CD4-positive, alpha-beta T cell (primary cell): ENCODE measurements at regions of chr11 and their contacts with region 1.

Region 1: GRCh38 chr11:13772223-13773046 is 104.0 kb downstream of the FAR1 start:
- DNase-seq: peak in 6 of 14 experiments; percentile 4 to 86 (median 66)
- ATAC-seq: peak; percentile 70
- H3K4me3 ChIP-seq: no peak overlapping the region
- H3K4me3 Mint-ChIP-seq: no peak overlapping the region
- H3K27ac ChIP-seq: no peak overlapping the region
- H3K27ac Mint-ChIP-seq: no peak overlapping the region
- H3K4me1 ChIP-seq: no peaks in the 10 kb centered on the region
- H3K4me1 Mint-ChIP-seq: no peaks in the 10 kb centered on the region
- H3K27me3 ChIP-seq: no peaks in the 10 kb centered on the region
- H3K27me3 Mint-ChIP-seq: no peaks in the 10 kb centered on the region
- CTCF ChIP-seq: peak; percentile 77

Region 2: GRCh38 chr11:13837286-13837685 is 64.9 kb after region 1 on chr11:
- CTCF ChIA-PET with region 1: no interaction called
- POLR2A ChIA-PET with region 1: no interaction called
- intact Hi-C with region 1: loop called in 1 of 2 experiments (anchors 5 kb)
- DNase-seq: no peak
- ATAC-seq: no peak
- H3K4me3 ChIP-seq: no peak overlapping the region
- H3K4me3 Mint-ChIP-seq: no peak overlapping the region
- H3K27ac ChIP-seq: no peak overlapping the region
- H3K27ac Mint-ChIP-seq: no peak overlapping the region
- H3K4me1 ChIP-seq: no peaks in the 10 kb centered on the region
- H3K4me1 Mint-ChIP-seq: no peaks in the 10 kb centered on the region
- H3K27me3 ChIP-seq: no peaks in the 10 kb centered on the region
- H3K27me3 Mint-ChIP-seq: no peaks in the 10 kb centered on the region
- CTCF ChIP-seq: no peak

Region 3: GRCh38 chr11:13955971-13956421 is 183.6 kb after region 1 on chr11:
- CTCF ChIA-PET with region 1: interaction called, 5 read pairs
- POLR2A ChIA-PET with region 1: no interaction called
- intact Hi-C with region 1: loop called (anchors 1 kb)
- DNase-seq: peak; percentile 32 to 89 (median 52)
- ATAC-seq: peak; percentile 77
- H3K4me3 ChIP-seq: no peak overlapping the region
- H3K4me3 Mint-ChIP-seq: no peak overlapping the region
- H3K27ac ChIP-seq: no peak overlapping the region
- H3K27ac Mint-ChIP-seq: no peak overlapping the region
- H3K4me1 ChIP-seq: peaks cover 10% of the 10 kb centered on the region
- H3K4me1 Mint-ChIP-seq: no peaks in the 10 kb centered on the region
- H3K27me3 ChIP-seq: peaks cover 3 to 4% of the 10 kb centered on the region in 2 experiments
- H3K27me3 Mint-ChIP-seq: peaks cover 26% of the 10 kb centered on the region
- CTCF ChIP-seq: peak; percentile 86

Region 4: DNA sequence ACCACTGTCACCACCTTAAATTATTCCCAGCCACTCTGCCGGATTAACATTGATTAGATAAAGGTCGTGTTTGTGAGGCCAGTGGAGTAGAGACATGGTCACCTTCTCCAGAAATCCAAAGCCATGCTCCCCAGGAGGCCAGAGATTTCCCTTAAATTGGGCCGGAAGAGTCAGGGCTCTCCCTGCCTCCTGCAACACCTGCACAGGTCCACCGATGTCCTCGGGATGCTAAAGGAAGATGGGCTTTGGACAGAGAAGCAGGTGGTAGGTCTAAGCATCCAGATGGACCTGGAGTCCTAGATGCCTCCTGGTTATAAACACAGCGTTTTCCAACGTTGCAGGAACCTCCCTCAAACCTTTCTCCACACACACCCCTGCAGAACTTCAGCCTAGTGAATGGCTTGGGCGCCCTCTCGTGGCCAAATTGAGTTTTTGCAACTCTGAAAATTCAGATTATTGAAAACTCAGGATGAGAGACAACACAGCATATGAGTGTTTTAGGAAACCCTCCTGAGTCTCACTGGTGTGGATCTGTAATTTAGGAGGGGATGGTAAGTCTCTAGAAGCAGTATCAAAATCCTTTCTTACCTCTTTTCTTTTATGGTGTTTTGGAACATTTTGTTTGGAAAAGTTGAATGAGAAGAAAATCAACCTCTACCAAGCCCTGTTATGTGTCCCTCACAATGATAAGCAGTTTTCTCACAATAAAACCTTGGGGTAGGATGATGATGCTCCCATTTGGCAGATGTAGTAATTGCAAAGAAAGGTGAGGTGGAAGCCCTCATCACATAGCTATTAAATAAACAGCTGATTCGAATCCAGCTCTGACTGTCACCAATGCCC is 476.9 kb after region 1 on chr11:
- CTCF ChIA-PET with region 1: interaction called, 27 read pairs
- POLR2A ChIA-PET with region 1: interaction called, 5 read pairs
- intact Hi-C with region 1: loop called (anchors 1 kb)
- DNase-seq: peak; percentile 53 to 83 (median 68)
- ATAC-seq: peak; percentile 68
- H3K4me3 ChIP-seq: peak overlapping the region; percentile 36
- H3K4me3 Mint-ChIP-seq: peak overlapping the region; percentile 62
- H3K27ac ChIP-seq: no peak overlapping the region
- H3K27ac Mint-ChIP-seq: no peak overlapping the region
- H3K4me1 ChIP-seq: peaks cover 12% of the 10 kb centered on the region
- H3K4me1 Mint-ChIP-seq: peaks cover 28% of the 10 kb centered on the region
- H3K27me3 ChIP-seq: no peaks in the 10 kb centered on the region
- H3K27me3 Mint-ChIP-seq: no peaks in the 10 kb centered on the region
- CTCF ChIP-seq: peak; percentile 98

Region 5: DNA sequence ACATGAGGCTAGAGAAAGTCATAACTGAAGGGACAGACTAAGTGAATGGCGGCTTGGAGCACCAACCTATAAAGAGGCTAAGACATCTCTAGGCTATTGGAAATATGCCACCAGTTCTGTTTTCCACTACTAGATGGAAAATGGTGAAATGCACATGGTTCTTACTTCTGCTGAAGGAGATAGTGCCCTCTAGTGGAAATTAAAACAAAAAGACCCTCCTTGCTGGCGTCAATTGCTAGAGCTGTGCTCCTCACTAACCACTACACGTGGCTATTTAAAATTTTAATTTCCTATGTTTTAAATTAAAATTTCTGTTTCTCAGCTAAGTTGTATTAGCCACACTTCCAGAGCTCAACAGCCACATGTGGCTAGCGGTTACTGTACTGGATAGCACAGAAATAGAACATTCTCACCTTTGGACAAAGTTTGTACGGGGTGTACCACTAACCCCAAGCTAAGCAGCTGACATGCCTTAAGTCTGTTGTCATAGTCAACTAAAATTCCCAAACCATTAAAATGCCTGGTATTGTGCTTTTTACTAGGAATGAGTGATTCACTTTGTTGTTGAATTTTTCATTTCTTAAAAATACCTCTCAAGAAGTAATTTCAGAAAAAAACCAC is 1233.8 kb after region 1 on chr11:
- CTCF ChIA-PET with region 1: no interaction called
- POLR2A ChIA-PET with region 1: no interaction called
- intact Hi-C with region 1: loop called in 1 of 2 experiments (anchors 10 kb)
- DNase-seq: peak in 3 of 14 experiments; percentile 55 to 57 (median 57)
- ATAC-seq: peak; percentile 54
- H3K4me3 ChIP-seq: no peak overlapping the region
- H3K4me3 Mint-ChIP-seq: no peak overlapping the region
- H3K27ac ChIP-seq: no peak overlapping the region
- H3K27ac Mint-ChIP-seq: no peak overlapping the region
- H3K4me1 ChIP-seq: no peaks in the 10 kb centered on the region
- H3K4me1 Mint-ChIP-seq: no peaks in the 10 kb centered on the region
- H3K27me3 ChIP-seq: peaks cover 0 to 19% of the 10 kb centered on the region in 2 experiments
- H3K27me3 Mint-ChIP-seq: peaks cover 64% of the 10 kb centered on the region
- CTCF ChIP-seq: peak; percentile 63

Region 6: GRCh38 chr11:15208378-15209222 is 1436.2 kb after region 1 on chr11:
- CTCF ChIA-PET with region 1: no interaction called
- POLR2A ChIA-PET with region 1: no interaction called
- intact Hi-C with region 1: loop called in 1 of 2 experiments (anchors 10 kb)
- DNase-seq: peak; percentile 52 to 79 (median 66)
- ATAC-seq: peak; percentile 81
- H3K4me3 ChIP-seq: no peak overlapping the region
- H3K4me3 Mint-ChIP-seq: no peak overlapping the region
- H3K27ac ChIP-seq: no peak overlapping the region
- H3K27ac Mint-ChIP-seq: no peak overlapping the region
- H3K4me1 ChIP-seq: peaks cover 3% of the 10 kb centered on the region
- H3K4me1 Mint-ChIP-seq: no peaks in the 10 kb centered on the region
- H3K27me3 ChIP-seq: peaks cover 0 to 5% of the 10 kb centered on the region in 2 experiments
- H3K27me3 Mint-ChIP-seq: peaks cover 5% of the 10 kb centered on the region
- CTCF ChIP-seq: peak; percentile 74